MCF 10A (cell line): ENCODE measurements at regions of chr11 and their contacts with region 1.

Region 1: DNA sequence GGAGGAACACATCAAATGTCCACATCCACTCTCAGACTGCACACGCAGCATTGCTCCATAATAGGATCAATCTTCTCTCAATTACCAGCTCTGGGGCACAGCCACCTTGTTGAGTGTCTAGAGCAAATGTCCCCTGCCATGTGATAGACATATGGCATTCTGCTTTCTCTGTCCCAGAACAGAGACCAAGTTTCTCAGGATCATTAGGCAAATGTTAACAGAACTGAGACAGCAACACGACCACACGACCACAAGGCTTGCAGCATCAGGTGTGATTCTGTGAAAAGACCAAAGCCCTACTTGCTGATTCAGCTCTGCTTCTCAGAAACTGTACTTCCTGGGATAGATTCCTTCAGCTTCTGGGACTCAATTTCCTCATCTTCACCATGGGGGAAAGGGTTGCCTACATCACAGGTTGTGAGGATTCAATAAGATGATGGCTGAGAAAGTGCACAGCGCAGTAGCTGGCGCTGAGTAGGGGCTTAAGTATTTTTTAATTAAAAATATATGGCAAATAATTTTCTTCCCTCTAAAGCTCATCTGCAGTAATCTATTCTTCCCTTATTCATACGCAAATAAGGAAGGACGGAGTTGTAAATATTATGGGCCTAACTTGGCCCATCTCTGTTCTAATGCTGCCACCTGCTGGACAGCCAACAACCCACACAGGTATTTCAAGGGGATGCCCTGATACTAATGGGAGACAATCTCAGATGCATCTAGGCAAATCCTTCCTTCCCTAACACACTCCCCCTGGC is 54.3 kb upstream of the USP47 start:
- DNase-seq: peak; percentile 81
- H3K4me3 Mint-ChIP-seq: no peak overlapping the region
- H3K27ac Mint-ChIP-seq: no peak overlapping the region
- H3K4me1 Mint-ChIP-seq: peaks cover 26% of the 10 kb centered on the region
- H3K27me3 Mint-ChIP-seq: no peaks in the 10 kb centered on the region
- CTCF ChIP-seq: peak; percentile 87

Region 2: GRCh38 chr11:10792398-10792975 is 995.0 kb before region 1 on chr11:
- CTCF ChIA-PET with region 1: no interaction called
- POLR2A ChIA-PET with region 1: no interaction called
- intact Hi-C with region 1: loop called (anchors 1 kb)
- DNase-seq: peak; percentile 88
- H3K4me3 Mint-ChIP-seq: no peak overlapping the region
- H3K27ac Mint-ChIP-seq: no peak overlapping the region
- H3K4me1 Mint-ChIP-seq: peaks cover 8% of the 10 kb centered on the region
- H3K27me3 Mint-ChIP-seq: no peaks in the 10 kb centered on the region
- CTCF ChIP-seq: peak; percentile 96

Region 3: DNA sequence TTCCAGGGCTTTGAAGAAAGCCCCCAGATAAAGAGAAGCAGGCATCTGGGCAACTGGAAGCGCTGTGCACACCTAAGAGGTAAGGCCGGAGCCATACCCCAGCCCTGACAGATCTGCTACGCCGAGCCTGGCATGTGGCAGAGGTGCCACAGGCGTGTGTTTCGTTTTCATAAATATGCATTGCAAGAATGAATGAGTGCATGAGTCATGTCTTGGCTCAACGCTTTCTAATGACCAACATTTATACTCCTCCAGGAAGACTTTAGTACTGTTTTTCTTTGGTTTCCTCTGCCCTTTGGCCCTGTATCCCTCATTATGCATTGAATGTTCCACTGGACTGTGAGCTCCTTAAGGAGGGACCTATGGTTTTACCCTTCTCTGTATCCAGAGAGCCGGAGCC is 395.7 kb before region 1 on chr11:
- CTCF ChIA-PET with region 1: no interaction called
- POLR2A ChIA-PET with region 1: no interaction called
- intact Hi-C with region 1: loop called (anchors 10 kb)
- DNase-seq: peak; percentile 87
- H3K4me3 Mint-ChIP-seq: no peak overlapping the region
- H3K27ac Mint-ChIP-seq: no peak overlapping the region
- H3K4me1 Mint-ChIP-seq: peaks cover 15% of the 10 kb centered on the region
- H3K27me3 Mint-ChIP-seq: no peaks in the 10 kb centered on the region
- CTCF ChIP-seq: no peak

Region 4: GRCh38 chr11:11701070-11701469 is 86.4 kb before region 1 on chr11:
- CTCF ChIA-PET with region 1: interaction called, 24 read pairs
- POLR2A ChIA-PET with region 1: interaction called, 3 read pairs
- intact Hi-C with region 1: loop called (anchors 1 kb)
- DNase-seq: peak; percentile 60
- H3K4me3 Mint-ChIP-seq: no peak overlapping the region
- H3K27ac Mint-ChIP-seq: peak overlapping the region; percentile 44
- H3K4me1 Mint-ChIP-seq: peaks cover 7% of the 10 kb centered on the region
- H3K27me3 Mint-ChIP-seq: no peaks in the 10 kb centered on the region
- CTCF ChIP-seq: peak; percentile 33

Region 5: DNA sequence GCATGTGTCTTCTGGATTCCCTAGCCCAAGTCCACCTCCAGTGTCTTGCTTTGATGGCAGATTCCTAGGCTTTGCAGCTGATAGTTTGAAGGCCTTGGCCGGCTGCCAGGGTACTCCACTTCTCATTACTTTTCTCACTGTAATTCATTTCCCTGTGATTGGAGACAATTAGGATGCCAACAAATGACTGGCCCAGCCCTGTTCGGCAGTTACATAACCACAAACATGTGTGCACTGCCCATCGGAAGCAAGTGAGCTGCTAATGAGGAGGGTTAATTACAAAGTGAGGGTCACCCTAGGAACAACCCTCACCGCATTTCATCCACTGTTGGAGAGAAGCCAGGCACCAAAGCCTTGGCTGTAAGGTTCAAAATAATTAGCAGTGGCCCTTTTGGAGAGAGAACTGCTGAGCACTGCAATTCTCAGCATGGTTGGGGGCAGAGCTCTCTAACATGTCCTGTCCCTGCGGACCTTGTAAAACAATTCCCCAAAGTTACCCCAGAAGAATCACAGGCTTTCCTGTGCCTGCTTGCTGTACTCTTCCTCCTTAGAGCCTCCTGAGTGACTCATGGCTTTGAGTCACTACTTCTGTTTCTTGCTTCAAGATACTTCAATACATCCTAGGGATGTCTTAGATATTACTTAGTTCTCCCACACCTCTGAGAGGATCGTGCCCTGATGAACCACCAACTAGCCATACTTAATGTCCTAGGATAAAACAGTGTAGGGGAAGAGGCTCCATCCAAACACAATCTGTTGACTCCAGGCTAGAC is 56.0 kb before region 1 on chr11:
- CTCF ChIA-PET with region 1: interaction called, 13 read pairs
- POLR2A ChIA-PET with region 1: interaction called, 5 read pairs
- intact Hi-C with region 1: no loop called
- DNase-seq: peak; percentile 85
- H3K4me3 Mint-ChIP-seq: no peak overlapping the region
- H3K27ac Mint-ChIP-seq: peak overlapping the region; percentile 72
- H3K4me1 Mint-ChIP-seq: peaks cover 17% of the 10 kb centered on the region
- H3K27me3 Mint-ChIP-seq: no peaks in the 10 kb centered on the region
- CTCF ChIP-seq: no peak

Region 6: DNA sequence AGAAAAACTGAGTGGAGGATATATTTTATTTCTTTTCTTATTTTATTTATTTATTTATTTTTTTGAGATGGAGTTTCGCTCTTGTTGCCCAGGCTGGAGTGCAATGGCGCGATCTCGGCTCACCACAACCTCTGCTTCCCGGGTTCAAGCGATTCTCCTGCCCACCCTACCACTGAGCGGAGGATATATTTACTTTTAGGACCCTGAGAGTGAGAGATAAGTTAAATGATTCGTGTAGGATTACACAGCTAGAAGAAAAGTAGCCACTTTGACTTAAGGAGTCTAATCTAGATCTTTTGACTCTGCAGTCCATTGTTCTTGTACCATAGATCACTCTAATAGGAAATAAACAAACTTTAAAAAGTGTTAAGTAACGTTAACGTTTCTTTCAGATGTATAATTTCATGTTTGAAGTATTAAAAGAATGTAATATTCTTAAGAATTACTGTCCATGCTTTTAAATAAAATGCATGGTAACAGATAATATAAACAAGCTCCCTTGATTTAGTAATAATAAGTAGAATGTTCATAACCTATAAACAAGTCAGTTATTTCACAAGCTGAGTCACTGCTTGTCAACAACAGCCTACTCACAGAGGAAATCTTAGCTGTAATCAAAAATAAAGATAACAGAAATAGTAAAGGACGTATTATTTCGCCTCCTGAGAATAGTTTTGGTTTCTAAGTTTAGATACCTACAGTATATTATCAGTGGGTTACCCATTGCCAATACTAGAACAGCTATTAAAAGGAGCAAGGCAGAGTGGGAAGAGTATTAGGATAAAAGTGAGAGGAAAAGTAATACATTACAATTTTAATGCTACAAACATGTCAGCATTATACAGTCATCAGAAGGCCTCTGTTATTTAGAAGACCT is 72.9 kb after region 1 on chr11:
- CTCF ChIA-PET with region 1: no interaction called
- POLR2A ChIA-PET with region 1: no interaction called
- intact Hi-C with region 1: no loop called
- DNase-seq: peak; percentile 14
- H3K4me3 Mint-ChIP-seq: no peak overlapping the region
- H3K27ac Mint-ChIP-seq: peak overlapping the region; percentile 42
- H3K4me1 Mint-ChIP-seq: peaks cover 35% of the 10 kb centered on the region
- H3K27me3 Mint-ChIP-seq: no peaks in the 10 kb centered on the region
- CTCF ChIP-seq: no peak

Region 7: GRCh38 chr11:12110201-12110713 is 322.8 kb after region 1 on chr11 and contains the start of gene MICAL2:
- CTCF ChIA-PET with region 1: no interaction called
- POLR2A ChIA-PET with region 1: no interaction called
- intact Hi-C with region 1: no loop called
- DNase-seq: peak; percentile 88
- H3K4me3 Mint-ChIP-seq: peak within 1 kb of the TSS; percentile 79
- H3K27ac Mint-ChIP-seq: peak within 1 kb of the TSS; percentile 61
- H3K4me1 Mint-ChIP-seq: peaks cover 29% of the 10 kb centered on the region
- H3K27me3 Mint-ChIP-seq: no peaks in the 10 kb centered on the region
- CTCF ChIP-seq: no peak
- total RNA-seq, gene MICAL2: 151 and 154 TPM in 2 replicates

Region 8: GRCh38 chr11:12200279-12201010 is 413.0 kb after region 1 on chr11:
- CTCF ChIA-PET with region 1: no interaction called
- POLR2A ChIA-PET with region 1: no interaction called
- intact Hi-C with region 1: no loop called
- DNase-seq: peak; percentile 65
- H3K4me3 Mint-ChIP-seq: no peak overlapping the region
- H3K27ac Mint-ChIP-seq: peak overlapping the region; percentile 72
- H3K4me1 Mint-ChIP-seq: peaks cover 14% of the 10 kb centered on the region
- H3K27me3 Mint-ChIP-seq: no peaks in the 10 kb centered on the region
- CTCF ChIP-seq: no peak